Heart right ventricle (tissue), 16 donors: ENCODE measurements at regions of chr2 and their contacts with region 1.

Region 1: DNA sequence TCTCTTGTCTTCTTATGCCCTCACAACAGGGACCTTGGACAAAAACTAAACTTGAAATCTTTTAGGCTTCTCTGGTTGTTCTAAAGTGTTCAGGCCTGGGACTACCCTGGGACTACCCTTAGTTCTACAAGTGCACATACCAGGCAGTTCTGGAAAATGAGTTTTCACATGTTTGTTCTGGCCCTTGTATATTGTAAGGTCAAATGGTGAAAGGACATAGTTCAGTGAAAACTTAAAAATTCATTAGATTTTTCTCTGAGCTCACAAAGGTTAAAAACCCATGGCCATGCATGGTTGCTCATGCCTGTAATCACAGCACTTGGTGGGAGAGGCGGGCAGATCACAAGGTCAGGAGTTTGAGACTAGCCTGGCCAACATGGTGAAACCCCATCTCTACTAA is 875.5 kb upstream of the FAM98A start:
- DNase-seq: no peak
- ATAC-seq: no peak
- H3K4me3 ChIP-seq: no peak overlapping the region
- H3K27ac ChIP-seq: no peak overlapping the region
- H3K4me1 ChIP-seq: no peaks in the 10 kb centered on the region
- H3K27me3 ChIP-seq: no peaks in the 10 kb centered on the region
- CTCF ChIP-seq: no peak

Region 2: GRCh38 chr2:35081001-35081621 is 606.5 kb after region 1 on chr2:
- intact Hi-C with region 1: no loop called
- DNase-seq: no peak
- ATAC-seq: no peak
- H3K4me3 ChIP-seq: no peak overlapping the region
- H3K27ac ChIP-seq: no peak overlapping the region
- H3K4me1 ChIP-seq: no peaks in the 10 kb centered on the region
- H3K27me3 ChIP-seq: no peaks in the 10 kb centered on the region
- CTCF ChIP-seq: no peak

Region 3: DNA sequence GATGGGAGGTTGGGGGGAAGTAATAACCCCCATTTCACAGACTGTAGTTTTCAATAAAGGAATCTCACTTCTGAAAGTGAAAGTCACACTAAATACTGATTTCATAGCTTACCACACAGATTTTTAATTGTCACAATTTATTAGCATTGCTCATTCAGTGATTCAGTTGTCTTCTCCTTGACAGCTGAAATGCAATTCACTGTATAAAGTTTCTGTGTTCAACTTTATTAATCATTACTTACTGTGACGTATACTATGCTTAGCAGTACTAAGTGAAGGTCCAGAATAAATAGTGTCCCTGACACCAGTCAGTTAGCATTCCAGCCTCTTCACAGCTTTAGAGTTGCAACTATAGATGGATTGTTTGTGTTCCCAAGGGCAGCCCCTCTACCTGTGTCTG is 1556.8 kb after region 1 on chr2:
- intact Hi-C with region 1: loop called in 1 of 10 experiments (anchors 10 kb)
- DNase-seq: no peak
- ATAC-seq: no peak
- H3K4me3 ChIP-seq: no peak overlapping the region
- H3K27ac ChIP-seq: no peak overlapping the region
- H3K4me1 ChIP-seq: no peaks in the 10 kb centered on the region
- H3K27me3 ChIP-seq: peaks cover 0 to under 1% (median 0%) of the 10 kb centered on the region in 7 donors
- CTCF ChIP-seq: no peak